Heart right ventricle (tissue), 16 donors: ENCODE measurements at regions of chr10 and their contacts with region 1.

Region 1: GRCh38 chr10:3785257-3785850 is 345 bp upstream of the KLF6 start:
- DNase-seq: peak; percentile 99
- ATAC-seq: peak; percentile 82 to 92 (median 84)
- H3K4me3 ChIP-seq: peak overlapping the region; percentile 67 to 99 (median 94)
- H3K27ac ChIP-seq: peak overlapping the region; percentile 99 to 100 (median 100)
- H3K4me1 ChIP-seq: peaks cover 11 to 34% (median 27%) of the 10 kb centered on the region in 9 donors
- H3K27me3 ChIP-seq: no peaks in the 10 kb centered on the region
- CTCF ChIP-seq: peak in 2 of 9 donors; percentile 3 to 15

Region 2: DNA sequence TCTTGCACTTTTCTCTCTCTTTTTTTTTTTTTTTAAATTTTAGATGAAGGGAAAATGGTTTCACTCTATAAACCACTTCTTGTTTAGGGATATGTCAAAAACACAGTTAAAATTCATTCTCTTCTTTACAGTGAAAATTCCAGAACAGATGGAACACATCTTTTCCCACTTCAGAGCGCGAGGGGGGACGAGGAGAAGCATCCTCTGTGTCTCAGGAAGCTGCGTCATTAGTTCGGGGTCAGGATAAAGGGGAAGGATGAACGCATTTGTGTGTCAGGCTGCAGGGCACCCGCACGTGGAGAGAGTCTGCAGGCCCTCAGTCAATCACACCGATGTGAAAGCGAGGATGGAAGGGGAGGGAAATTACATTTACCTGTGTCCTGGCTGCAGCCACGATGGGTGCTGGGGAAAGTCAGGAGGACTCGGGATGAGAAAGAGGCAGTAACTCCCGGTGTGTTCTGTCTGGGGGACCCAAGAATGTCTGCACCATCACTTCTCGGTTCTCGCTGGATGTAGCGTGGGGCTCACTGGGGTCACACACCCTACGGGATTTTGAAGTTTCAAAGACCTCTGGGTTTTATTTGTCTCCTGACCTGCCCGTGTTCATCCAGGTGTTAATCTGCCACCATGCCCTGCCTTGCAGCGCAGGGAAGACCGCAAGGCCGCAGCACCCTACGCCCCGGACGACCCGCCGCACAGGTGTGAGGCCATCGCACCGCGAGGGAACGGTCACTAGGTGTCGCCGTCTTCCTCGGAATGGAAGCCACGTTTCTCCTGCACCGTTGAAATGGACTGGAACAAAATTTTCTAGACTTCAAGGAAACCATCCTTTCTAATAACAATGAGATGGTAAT is 546.1 kb before region 1 on chr10:
- intact Hi-C with region 1: loop called in 5 of 10 experiments (anchors 5 to 10 kb)
- DNase-seq: peak; percentile 77 to 82
- ATAC-seq: peak; percentile 81 to 93 (median 88)
- H3K4me3 ChIP-seq: peak overlapping the region in 6 of 10 donors; percentile 23 to 36 (median 32)
- H3K27ac ChIP-seq: peak overlapping the region in 9 of 10 donors; percentile 11 to 84 (median 68)
- H3K4me1 ChIP-seq: peaks cover 0 to 26% (median 5%) of the 10 kb centered on the region in 9 donors
- H3K27me3 ChIP-seq: peaks cover 0 to 4% (median 0%) of the 10 kb centered on the region in 7 donors
- CTCF ChIP-seq: peak; percentile 85 to 98 (median 95)

Region 3: DNA sequence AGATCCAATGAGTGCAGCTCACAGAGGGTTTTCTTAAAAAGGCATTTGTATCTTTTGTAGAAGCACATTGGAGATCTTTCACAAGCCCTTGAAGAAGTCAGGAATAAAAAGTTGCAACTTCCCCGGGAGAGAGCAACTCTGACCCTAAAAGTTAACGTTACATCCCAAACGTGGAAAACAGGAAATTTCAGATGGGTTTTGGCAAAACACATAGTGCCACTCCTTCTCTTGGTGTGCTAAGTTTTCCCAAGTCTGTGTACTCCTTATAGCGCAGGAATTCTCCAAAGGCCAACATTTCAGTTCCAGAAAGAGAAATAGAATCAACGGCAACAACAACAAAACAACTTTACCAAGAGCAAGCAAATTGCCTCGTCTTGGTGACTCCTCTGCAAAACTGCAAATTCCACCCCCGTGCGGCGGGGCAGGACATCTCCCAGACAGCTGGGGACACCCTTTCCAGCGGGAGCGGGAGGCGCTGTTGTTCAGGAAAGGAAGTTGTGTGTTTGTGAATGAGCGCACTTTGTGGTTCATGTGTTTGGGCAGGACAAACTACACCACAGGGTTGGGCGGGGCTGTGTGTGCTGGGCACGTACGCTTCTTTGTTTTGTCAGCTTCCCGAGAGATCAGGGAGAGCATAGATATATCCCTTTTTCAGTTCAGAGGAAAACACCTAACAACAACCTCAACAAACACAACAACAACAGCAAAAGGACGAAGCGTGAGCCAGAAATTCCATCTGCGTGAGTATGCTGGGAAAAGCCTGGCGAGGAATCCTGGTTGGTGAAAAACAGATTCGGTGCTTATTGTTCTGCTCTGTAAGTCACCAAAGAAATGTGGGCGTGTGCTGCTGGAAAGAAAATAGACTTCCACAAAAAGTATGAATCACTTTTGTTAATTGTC is 318.1 kb before region 1 on chr10:
- intact Hi-C with region 1: loop called in 3 of 10 experiments (anchors 5 kb)
- DNase-seq: peak; percentile 81 to 87
- ATAC-seq: peak; percentile 69 to 89 (median 82)
- H3K4me3 ChIP-seq: peak overlapping the region in 6 of 10 donors; percentile 7 to 35 (median 20)
- H3K27ac ChIP-seq: peak overlapping the region; percentile 46 to 94 (median 88)
- H3K4me1 ChIP-seq: peaks cover 0 to 71% (median 59%) of the 10 kb centered on the region in 9 donors
- H3K27me3 ChIP-seq: no peaks in the 10 kb centered on the region
- CTCF ChIP-seq: peak; percentile 24 to 71 (median 53)

Region 4: DNA sequence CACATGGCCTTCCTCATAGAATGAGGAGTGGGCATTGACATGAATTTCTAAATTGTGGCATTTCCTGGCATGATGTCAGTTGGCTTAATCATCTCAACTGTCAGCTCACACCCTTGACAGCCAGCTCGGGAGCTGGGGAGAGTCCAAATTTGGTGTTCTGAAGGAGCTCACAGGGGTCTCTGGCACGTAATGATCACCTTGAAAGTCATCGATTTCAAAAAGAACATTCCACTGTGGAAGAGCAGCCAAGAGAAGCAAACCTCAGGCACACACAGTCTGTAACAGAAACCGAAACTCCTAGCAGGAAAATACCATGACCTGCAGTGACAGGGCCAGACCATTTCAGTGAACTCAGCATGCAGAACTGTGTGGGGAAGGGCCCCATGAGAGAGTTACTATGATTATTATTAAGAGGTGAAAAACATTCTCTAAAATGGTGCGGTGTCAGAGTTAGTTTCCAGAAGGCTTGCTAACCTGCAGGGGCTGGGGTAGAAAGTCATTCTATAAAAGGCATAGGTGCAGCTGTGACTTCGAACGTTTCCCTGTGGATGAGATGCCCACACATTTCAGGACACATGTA is 26.0 kb after region 1 on chr10:
- intact Hi-C with region 1: loop called in 2 of 10 experiments (anchors 2 kb)
- DNase-seq: peak in 1 of 2 donors; percentile 54
- ATAC-seq: peak; percentile 20 to 71 (median 66)
- H3K4me3 ChIP-seq: peak overlapping the region in 6 of 10 donors; percentile 4 to 30 (median 22)
- H3K27ac ChIP-seq: peak overlapping the region; percentile 49 to 95 (median 89)
- H3K4me1 ChIP-seq: peaks cover 19 to 75% (median 57%) of the 10 kb centered on the region in 9 donors
- H3K27me3 ChIP-seq: no peaks in the 10 kb centered on the region
- CTCF ChIP-seq: no peak

Region 5: DNA sequence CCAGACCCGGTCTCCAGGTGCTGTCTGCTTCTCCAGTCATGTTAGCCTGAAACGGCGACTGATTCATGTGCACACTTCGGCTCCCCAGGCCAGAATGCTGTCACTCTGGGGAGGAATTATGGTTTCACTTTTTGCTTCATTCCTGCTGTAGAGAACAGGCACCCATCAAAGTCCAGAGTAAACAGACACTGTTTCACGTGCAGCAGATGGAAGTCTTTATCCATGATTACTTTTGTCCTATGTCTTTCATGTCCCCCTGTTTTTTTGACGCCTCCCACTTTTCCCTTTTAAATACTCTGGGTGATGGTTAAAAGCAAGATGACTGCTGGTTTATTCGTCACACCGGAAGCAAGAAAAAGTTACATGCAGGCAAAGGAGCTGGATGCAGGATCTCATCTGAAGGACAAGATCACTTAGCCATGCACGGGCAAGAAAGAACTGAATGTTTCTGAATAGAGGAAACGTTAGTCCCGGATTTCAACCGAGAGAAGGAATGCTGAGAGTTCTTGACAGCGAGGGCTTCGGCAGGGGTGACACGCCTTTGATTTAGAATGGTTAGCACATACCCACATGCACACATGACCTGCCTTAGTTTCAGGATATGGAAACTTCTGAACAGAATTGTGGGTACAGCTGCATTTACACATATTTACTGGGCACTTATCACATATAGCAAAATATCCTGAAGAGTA is 249.7 kb after region 1 on chr10:
- intact Hi-C with region 1: loop called in 1 of 10 experiments (anchors 10 kb)
- DNase-seq: no peak
- ATAC-seq: peak in 7 of 8 donors; percentile 17 to 75 (median 60)
- H3K4me3 ChIP-seq: peak overlapping the region in 8 of 10 donors; percentile 3 to 38 (median 31)
- H3K27ac ChIP-seq: peak overlapping the region; percentile 11 to 75 (median 42)
- H3K4me1 ChIP-seq: peaks cover 0 to 24% (median 0%) of the 10 kb centered on the region in 9 donors
- H3K27me3 ChIP-seq: no peaks in the 10 kb centered on the region
- CTCF ChIP-seq: no peak

Region 6: GRCh38 chr10:4241724-4242345 is 456.5 kb after region 1 on chr10:
- intact Hi-C with region 1: loop called in 4 of 10 experiments (anchors 1 to 5 kb)
- DNase-seq: peak in 1 of 2 donors; percentile 87
- ATAC-seq: peak; percentile 82 to 92 (median 90)
- H3K4me3 ChIP-seq: peak overlapping the region in 9 of 10 donors; percentile 10 to 56 (median 45)
- H3K27ac ChIP-seq: peak overlapping the region; percentile 72 to 96 (median 89)
- H3K4me1 ChIP-seq: peaks cover 0 to 62% (median 46%) of the 10 kb centered on the region in 9 donors
- H3K27me3 ChIP-seq: no peaks in the 10 kb centered on the region
- CTCF ChIP-seq: no peak

Region 7: GRCh38 chr10:4656576-4657182 is 871.3 kb after region 1 on chr10:
- intact Hi-C with region 1: loop called in 6 of 10 experiments (anchors 5 to 10 kb)
- DNase-seq: peak; percentile 33 to 70
- ATAC-seq: peak in 6 of 8 donors; percentile 50 to 72 (median 64)
- H3K4me3 ChIP-seq: no peak overlapping the region
- H3K27ac ChIP-seq: no peak overlapping the region
- H3K4me1 ChIP-seq: peaks cover 0 to 34% (median 10%) of the 10 kb centered on the region in 9 donors
- H3K27me3 ChIP-seq: no peaks in the 10 kb centered on the region
- CTCF ChIP-seq: peak; percentile 79 to 95 (median 93)